A673 (cell line): ENCODE measurements at regions of chr11 and their contacts with region 1.

Region 1: GRCh38 chr11:36469063-36469462 is 41.0 kb downstream of the TRAF6 start:
- DNase-seq: peak; percentile 61
- H3K4me3 ChIP-seq: no peak overlapping the region
- H3K27ac ChIP-seq: no peak overlapping the region
- H3K4me1 ChIP-seq: peaks cover 11% of the 10 kb centered on the region
- H3K27me3 ChIP-seq: no peaks in the 10 kb centered on the region
- CTCF ChIP-seq: peak; percentile 64

Region 2: DNA sequence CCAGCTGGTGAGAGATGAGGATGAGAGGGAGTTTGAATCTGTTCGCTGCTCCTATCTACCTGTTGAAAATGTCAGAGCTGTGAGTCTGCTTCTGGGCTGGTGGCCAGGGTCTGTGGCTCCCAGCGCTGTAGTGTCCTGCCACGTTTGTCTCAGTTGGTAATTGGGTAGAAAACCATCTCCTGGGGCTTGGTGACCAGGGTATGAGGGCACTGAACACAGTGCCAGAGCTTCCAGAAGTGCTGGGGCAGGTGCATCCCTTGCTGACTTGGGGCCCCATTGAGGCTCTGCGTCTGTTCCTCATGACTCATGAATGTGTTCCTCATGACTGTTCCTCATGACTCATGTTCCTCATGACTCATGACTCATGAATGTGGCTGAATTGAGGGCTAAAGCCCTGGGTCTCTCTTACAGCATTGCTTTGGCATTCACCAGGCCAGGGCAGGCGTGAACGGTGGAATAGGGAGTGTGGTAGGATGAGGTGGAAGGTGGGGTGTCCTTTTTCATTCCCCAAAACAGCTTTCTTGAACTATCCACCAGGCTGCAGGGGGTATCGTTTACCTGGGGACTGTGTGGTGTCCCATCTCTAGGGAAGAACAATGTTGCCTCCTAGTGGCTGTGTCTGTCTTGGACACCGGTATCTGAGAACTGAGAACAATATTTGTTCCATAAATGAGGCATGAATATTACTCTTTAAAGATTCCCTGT is 319.4 kb before region 1 on chr11:
- CTCF ChIA-PET with region 1: interaction called, 10 read pairs
- POLR2A ChIA-PET with region 1: no interaction called
- intact Hi-C with region 1: no loop called
- DNase-seq: peak; percentile 97
- H3K4me3 ChIP-seq: no peak overlapping the region
- H3K27ac ChIP-seq: no peak overlapping the region
- H3K4me1 ChIP-seq: peaks cover 10% of the 10 kb centered on the region
- H3K27me3 ChIP-seq: no peaks in the 10 kb centered on the region
- CTCF ChIP-seq: peak; percentile 76